ENCODE measurements at regions of chr18 and their contacts with region 1.

Region 1: GRCh38 chr18:23365602-23366001 is 87.5 kb upstream of the RIOK3 start:
- DNase-seq: no peak
- ATAC-seq: no peak
- H3K4me3 ChIP-seq: no peak overlapping the region
- H3K27ac ChIP-seq: no peak overlapping the region
- H3K4me1 ChIP-seq: peaks cover 0 to 6% (median 0%) of the 10 kb centered on the region in 4 donors
- H3K27me3 ChIP-seq: no peaks in the 10 kb centered on the region
- CTCF ChIP-seq: no peak
- POLR2A ChIP-seq: no peak

Region 2: GRCh38 chr18:23126376-23127056 is 239.1 kb before region 1 on chr18:
- intact Hi-C with region 1: loop called in 1 of 2 experiments (anchors 10 kb)
- DNase-seq: no peak
- ATAC-seq: peak; percentile 33 to 42 (median 40)
- H3K4me3 ChIP-seq: no peak overlapping the region
- H3K27ac ChIP-seq: no peak overlapping the region
- H3K4me1 ChIP-seq: peaks cover 0 to 5% (median 0%) of the 10 kb centered on the region in 4 donors
- H3K27me3 ChIP-seq: no peaks in the 10 kb centered on the region
- CTCF ChIP-seq: no peak
- POLR2A ChIP-seq: no peak